PC-9 (cell line): ENCODE measurements at regions of chr5 and their contacts with region 1.

Region 1: DNA sequence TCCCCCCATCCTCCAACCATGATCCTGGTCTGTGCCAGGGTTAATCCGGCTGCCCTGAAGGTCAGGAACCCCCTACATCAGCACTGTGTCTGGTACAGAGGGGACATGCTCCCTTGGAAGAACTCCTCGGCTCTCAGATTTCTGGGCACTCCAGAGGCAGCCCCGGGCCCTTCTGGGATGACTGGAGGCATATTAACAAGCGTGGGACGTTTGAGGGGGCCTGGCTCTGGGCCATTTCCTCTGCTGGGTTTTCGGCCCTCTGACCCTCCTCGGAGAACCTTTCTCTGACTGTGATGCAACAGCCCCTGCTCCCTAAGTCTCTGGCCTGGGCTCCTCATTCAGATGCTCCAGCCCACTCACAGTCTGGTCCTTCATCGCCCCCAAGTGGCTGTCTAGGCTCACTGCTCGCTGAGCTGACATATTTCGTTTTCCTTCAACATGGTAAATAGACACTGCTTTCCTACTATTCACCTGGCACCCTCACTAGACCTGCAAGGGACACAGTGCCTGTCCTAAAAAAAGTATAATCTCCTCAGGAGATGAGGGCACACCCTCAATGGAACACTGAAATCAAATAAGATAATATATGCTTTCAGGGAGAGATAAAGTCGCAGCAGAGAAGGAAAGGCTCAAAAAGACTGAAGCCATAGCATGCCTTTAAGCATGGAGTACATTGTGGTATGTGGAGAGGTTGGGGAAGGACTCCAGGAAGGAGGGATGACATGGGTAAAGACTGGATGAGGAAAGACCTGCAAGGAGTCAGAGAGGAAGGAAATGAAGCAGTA is 404.7 kb upstream of the TRPC7 start:
- DNase-seq: peak; percentile 46 to 68
- H3K4me3 ChIP-seq: no peak overlapping the region
- H3K27ac ChIP-seq: no peak overlapping the region
- H3K4me1 ChIP-seq: peaks cover 12% of the 10 kb centered on the region
- H3K27me3 ChIP-seq: no peaks in the 10 kb centered on the region
- CTCF ChIP-seq: peak; percentile 94

Region 2: GRCh38 chr5:135887351-135887864 is 882.7 kb before region 1 on chr5:
- CTCF ChIA-PET with region 1: no interaction called
- POLR2A ChIA-PET with region 1: no interaction called
- intact Hi-C with region 1: loop called (anchors 1 kb)
- DNase-seq: peak; percentile 56 to 65
- H3K4me3 ChIP-seq: no peak overlapping the region
- H3K27ac ChIP-seq: no peak overlapping the region
- H3K4me1 ChIP-seq: peaks cover 15% of the 10 kb centered on the region
- H3K27me3 ChIP-seq: peaks cover 20% of the 10 kb centered on the region
- CTCF ChIP-seq: peak; percentile 90

Region 3: DNA sequence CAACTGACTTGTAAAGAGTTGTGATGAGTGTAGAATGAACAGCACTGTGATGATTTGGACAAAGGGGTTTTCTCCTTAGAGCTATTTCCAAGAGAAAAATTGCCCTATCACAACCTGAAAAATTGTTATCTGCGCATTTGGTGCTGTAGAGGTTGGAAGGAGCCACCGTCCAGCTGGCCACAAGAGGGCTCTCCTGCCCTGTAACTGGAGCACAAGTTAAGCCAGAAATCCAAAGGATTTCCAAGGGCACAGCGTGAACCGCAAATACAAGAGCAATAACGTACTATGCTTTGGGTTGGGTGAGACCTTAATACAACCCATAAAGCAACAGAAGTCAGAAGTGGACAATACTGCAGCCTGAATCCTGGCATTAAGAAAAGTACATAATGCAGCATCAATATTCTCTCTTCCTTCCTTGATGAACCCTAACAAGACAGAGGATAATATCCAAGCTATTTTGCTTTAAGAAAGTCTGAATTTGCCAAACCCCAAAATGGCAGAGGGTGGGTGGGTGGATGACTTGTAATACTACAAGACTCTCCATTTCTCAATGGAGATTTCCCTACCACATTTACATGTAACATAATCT is 520.3 kb before region 1 on chr5:
- CTCF ChIA-PET with region 1: interaction called, 3 read pairs
- POLR2A ChIA-PET with region 1: no interaction called
- intact Hi-C with region 1: loop called (anchors 1 kb)
- DNase-seq: peak in 1 of 2 experiments; percentile 49
- H3K4me3 ChIP-seq: no peak overlapping the region
- H3K27ac ChIP-seq: no peak overlapping the region
- H3K4me1 ChIP-seq: no peaks in the 10 kb centered on the region
- H3K27me3 ChIP-seq: peaks cover under 1% of the 10 kb centered on the region; the same call in 1 of the 2 replicates
- CTCF ChIP-seq: peak; percentile 89

Region 4: DNA sequence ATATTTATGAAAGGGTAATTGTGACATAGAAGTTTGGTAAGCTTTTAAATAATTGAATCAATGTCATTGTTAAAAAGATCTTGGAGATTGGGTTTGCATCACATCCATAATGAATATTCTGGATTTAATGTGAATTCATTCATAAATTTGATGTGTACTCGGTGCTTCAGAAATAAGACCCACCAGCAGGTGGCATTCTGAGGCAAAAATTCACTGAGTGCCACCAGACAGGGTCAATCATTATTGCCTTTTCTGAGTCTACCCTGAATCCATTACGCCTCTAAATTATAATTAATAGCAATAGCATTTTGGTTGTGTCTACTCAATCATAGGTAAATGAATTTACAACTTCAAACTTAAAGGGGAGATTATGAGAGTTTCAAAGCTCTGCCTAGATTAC is 405.8 kb before region 1 on chr5:
- CTCF ChIA-PET with region 1: interaction called, 3 read pairs
- POLR2A ChIA-PET with region 1: no interaction called
- intact Hi-C with region 1: loop called (anchors 1 kb)
- DNase-seq: no peak
- H3K4me3 ChIP-seq: no peak overlapping the region
- H3K27ac ChIP-seq: no peak overlapping the region
- H3K4me1 ChIP-seq: no peaks in the 10 kb centered on the region
- H3K27me3 ChIP-seq: no peaks in the 10 kb centered on the region
- CTCF ChIP-seq: peak; percentile 78

Region 5: GRCh38 chr5:136686192-136686872 is 83.8 kb before region 1 on chr5:
- CTCF ChIA-PET with region 1: no interaction called
- POLR2A ChIA-PET with region 1: no interaction called
- intact Hi-C with region 1: loop called (anchors 1 kb)
- DNase-seq: peak; percentile 42 to 84
- H3K4me3 ChIP-seq: no peak overlapping the region
- H3K27ac ChIP-seq: no peak overlapping the region
- H3K4me1 ChIP-seq: peaks cover 5% of the 10 kb centered on the region; the same call in 1 of the 2 replicates
- H3K27me3 ChIP-seq: no peaks in the 10 kb centered on the region
- CTCF ChIP-seq: peak; percentile 83

Region 6: GRCh38 chr5:136729901-136730385 is 40.1 kb before region 1 on chr5:
- CTCF ChIA-PET with region 1: no interaction called
- POLR2A ChIA-PET with region 1: no interaction called
- intact Hi-C with region 1: loop called (anchors 2 kb)
- DNase-seq: peak; percentile 35 to 97
- H3K4me3 ChIP-seq: peak overlapping the region; percentile 18; the same call in 1 of the 2 replicates
- H3K27ac ChIP-seq: peak overlapping the region; percentile 95
- H3K4me1 ChIP-seq: peaks cover 41% of the 10 kb centered on the region
- H3K27me3 ChIP-seq: no peaks in the 10 kb centered on the region
- CTCF ChIP-seq: no peak

Region 7: GRCh38 chr5:136740228-136740627 is 29.9 kb before region 1 on chr5:
- CTCF ChIA-PET with region 1: no interaction called
- POLR2A ChIA-PET with region 1: no interaction called
- intact Hi-C with region 1: no loop called
- DNase-seq: no peak
- H3K4me3 ChIP-seq: no peak overlapping the region
- H3K27ac ChIP-seq: no peak overlapping the region
- H3K4me1 ChIP-seq: no peaks in the 10 kb centered on the region
- H3K27me3 ChIP-seq: no peaks in the 10 kb centered on the region
- CTCF ChIP-seq: no peak

Region 8: GRCh38 chr5:136853971-136854370 is 83.9 kb after region 1 on chr5:
- CTCF ChIA-PET with region 1: no interaction called
- POLR2A ChIA-PET with region 1: no interaction called
- intact Hi-C with region 1: no loop called
- DNase-seq: no peak
- H3K4me3 ChIP-seq: no peak overlapping the region
- H3K27ac ChIP-seq: no peak overlapping the region
- H3K4me1 ChIP-seq: no peaks in the 10 kb centered on the region
- H3K27me3 ChIP-seq: no peaks in the 10 kb centered on the region
- CTCF ChIP-seq: no peak

Region 9: GRCh38 chr5:136864960-136865359 is 94.9 kb after region 1 on chr5:
- CTCF ChIA-PET with region 1: no interaction called
- POLR2A ChIA-PET with region 1: no interaction called
- intact Hi-C with region 1: no loop called
- DNase-seq: no peak
- H3K4me3 ChIP-seq: no peak overlapping the region
- H3K27ac ChIP-seq: no peak overlapping the region
- H3K4me1 ChIP-seq: no peaks in the 10 kb centered on the region
- H3K27me3 ChIP-seq: no peaks in the 10 kb centered on the region
- CTCF ChIP-seq: no peak

Region 10: DNA sequence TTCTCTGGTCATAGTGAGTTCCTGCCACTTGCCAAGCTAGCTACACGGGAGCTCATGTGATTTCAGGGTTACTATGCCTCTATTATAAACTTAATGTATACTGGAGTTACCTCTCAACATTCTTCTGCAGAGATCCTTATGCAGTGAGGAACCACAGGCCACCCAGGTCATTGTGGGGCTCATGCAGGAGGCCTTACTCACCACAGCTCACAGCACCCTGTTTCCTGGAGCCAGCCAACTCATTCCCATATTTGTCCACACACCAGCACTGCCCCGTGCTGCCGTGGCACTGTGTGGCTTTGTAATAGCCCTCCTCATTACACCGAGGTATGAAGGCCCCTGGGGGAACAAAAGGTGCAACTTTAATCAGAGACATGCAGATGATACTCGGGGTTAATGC is 209.0 kb after region 1 on chr5:
- CTCF ChIA-PET with region 1: no interaction called
- POLR2A ChIA-PET with region 1: no interaction called
- intact Hi-C with region 1: no loop called
- DNase-seq: peak; percentile 45 to 60
- H3K4me3 ChIP-seq: no peak overlapping the region
- H3K27ac ChIP-seq: no peak overlapping the region
- H3K4me1 ChIP-seq: no peaks in the 10 kb centered on the region; the same call in 1 of the 2 replicates
- H3K27me3 ChIP-seq: no peaks in the 10 kb centered on the region
- CTCF ChIP-seq: no peak